Endothelial cell of umbilical vein (primary cell): ENCODE measurements at regions of chr11 and their contacts with region 1.

Region 1: DNA sequence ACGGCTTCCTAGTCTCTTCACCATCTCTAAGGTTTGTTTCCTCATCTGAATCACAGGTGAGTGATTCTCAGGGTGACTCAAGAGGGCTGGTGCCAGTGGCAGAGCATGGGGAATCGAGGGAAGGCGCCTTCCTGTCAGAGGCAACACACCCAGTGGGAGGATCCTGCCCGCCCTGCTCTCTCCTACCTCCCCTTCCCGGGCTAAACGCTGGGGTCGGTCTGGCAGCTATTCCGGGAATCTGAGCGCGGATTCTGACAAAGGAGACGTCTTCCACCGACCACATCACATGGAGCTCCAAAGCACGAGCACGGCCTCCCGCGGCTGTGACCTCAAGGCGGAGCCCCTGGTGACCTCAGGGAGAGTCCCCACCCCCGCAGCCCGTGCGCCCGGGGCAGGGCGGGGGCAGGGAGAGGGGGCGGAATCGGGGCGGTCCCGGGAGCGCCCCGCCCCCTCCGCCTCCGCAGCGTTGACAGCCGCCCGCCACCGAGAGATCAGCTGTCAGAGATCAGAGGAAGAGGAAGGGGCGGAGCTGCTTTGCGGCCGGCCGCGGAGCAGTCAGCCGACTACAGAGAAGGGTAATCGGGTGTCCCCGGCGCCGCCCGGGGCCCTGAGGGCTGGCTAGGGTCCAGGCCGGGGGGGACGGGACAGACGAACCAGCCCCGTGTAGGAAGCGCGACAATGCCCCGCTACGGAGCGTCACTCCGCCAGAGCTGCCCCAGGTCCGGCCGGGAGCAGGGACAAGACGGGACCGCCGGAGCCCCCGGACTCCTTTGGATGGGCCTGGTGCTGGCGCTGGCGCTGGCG is at the start of gene SMPD1:
- DNase-seq: peak; percentile 90
- H3K4me3 ChIP-seq: peak within 1 kb of the TSS; percentile 71 to 82 (median 72)
- H3K27ac ChIP-seq: peak within 1 kb of the TSS; percentile 73
- H3K4me1 ChIP-seq: peaks cover 33% of the 10 kb centered on the region
- H3K27me3 ChIP-seq: no peaks in the 10 kb centered on the region
- CTCF ChIP-seq: no peak
- POLR2A ChIP-seq: peak; percentile 86
- total RNA-seq, gene SMPD1: 51.9 and 58.9 TPM in 2 replicates

Region 2: GRCh38 chr11:6084587-6084986 is 305.5 kb before region 1 on chr11:
- CTCF ChIA-PET with region 1: no interaction called
- POLR2A ChIA-PET with region 1: no interaction called
- dilution Hi-C with region 1: no loop called
- intact Hi-C with region 1: no loop called
- DNase-seq: no peak
- H3K4me3 ChIP-seq: no peak overlapping the region
- H3K27ac ChIP-seq: no peak overlapping the region
- H3K4me1 ChIP-seq: no peaks in the 10 kb centered on the region
- H3K27me3 ChIP-seq: peaks cover 0 to 5% of the 10 kb centered on the region in 2 experiments
- CTCF ChIP-seq: no peak
- POLR2A ChIP-seq: no peak

Region 3: GRCh38 chr11:6419009-6419631 is 29.0 kb after region 1 on chr11 and contains the start of gene APBB1:
- CTCF ChIA-PET with region 1: interaction called, 5 read pairs
- POLR2A ChIA-PET with region 1: interaction called, 5 read pairs
- dilution Hi-C with region 1: no loop called
- intact Hi-C with region 1: loop called (anchors 1 kb)
- DNase-seq: peak; percentile 67
- H3K4me3 ChIP-seq: peak within 1 kb of the TSS; percentile 78 to 88 (median 86)
- H3K27ac ChIP-seq: no peak within 1 kb of the TSS
- H3K4me1 ChIP-seq: peaks cover 10% of the 10 kb centered on the region
- H3K27me3 ChIP-seq: peaks cover 7 to 14% of the 10 kb centered on the region in 2 experiments
- CTCF ChIP-seq: peak in 1 of 2 donors; percentile 18
- POLR2A ChIP-seq: peak; percentile 79
- total RNA-seq, gene APBB1: 44.3 and 48.0 TPM in 2 replicates

Region 4: GRCh38 chr11:6473481-6474422 is 83.6 kb after region 1 on chr11 and contains the start of gene TRIM3:
- CTCF ChIA-PET with region 1: interaction called, 3 read pairs
- POLR2A ChIA-PET with region 1: no interaction called
- dilution Hi-C with region 1: no loop called
- intact Hi-C with region 1: loop called (anchors 1 kb)
- DNase-seq: peak; percentile 87
- H3K4me3 ChIP-seq: peak within 1 kb of the TSS; percentile 61 to 87 (median 68)
- H3K27ac ChIP-seq: peak within 1 kb of the TSS; percentile 87
- H3K4me1 ChIP-seq: peaks cover 21% of the 10 kb centered on the region
- H3K27me3 ChIP-seq: no peaks in the 10 kb centered on the region
- CTCF ChIP-seq: peak in 1 of 2 donors; percentile 42
- POLR2A ChIP-seq: peak; percentile 95
- total RNA-seq, gene TRIM3: 25.6 and 29.2 TPM in 2 replicates